ENCODE measurements at regions of chr15 and their contacts with region 1.

Region 1: GRCh38 chr15:70466895-70467529 is 296.3 kb downstream of the UACA start:
- DNase-seq: no peak
- ATAC-seq: peak; percentile 73
- H3K4me3 Mint-ChIP-seq: no peak overlapping the region
- H3K27ac Mint-ChIP-seq: no peak overlapping the region
- H3K4me1 Mint-ChIP-seq: peaks cover 20% of the 10 kb centered on the region
- H3K27me3 Mint-ChIP-seq: peaks cover 3% of the 10 kb centered on the region
- CTCF ChIP-seq: peak; percentile 72

Region 2: GRCh38 chr15:68730471-68730919 is 1736.5 kb before region 1 on chr15:
- CTCF ChIA-PET with region 1: no interaction called
- POLR2A ChIA-PET with region 1: no interaction called
- intact Hi-C with region 1: no loop called
- DNase-seq: no peak
- ATAC-seq: no peak
- H3K4me3 Mint-ChIP-seq: no peak overlapping the region
- H3K27ac Mint-ChIP-seq: no peak overlapping the region
- H3K4me1 Mint-ChIP-seq: peaks cover 21% of the 10 kb centered on the region
- H3K27me3 Mint-ChIP-seq: peaks cover 2% of the 10 kb centered on the region
- CTCF ChIP-seq: no peak

Region 3: DNA sequence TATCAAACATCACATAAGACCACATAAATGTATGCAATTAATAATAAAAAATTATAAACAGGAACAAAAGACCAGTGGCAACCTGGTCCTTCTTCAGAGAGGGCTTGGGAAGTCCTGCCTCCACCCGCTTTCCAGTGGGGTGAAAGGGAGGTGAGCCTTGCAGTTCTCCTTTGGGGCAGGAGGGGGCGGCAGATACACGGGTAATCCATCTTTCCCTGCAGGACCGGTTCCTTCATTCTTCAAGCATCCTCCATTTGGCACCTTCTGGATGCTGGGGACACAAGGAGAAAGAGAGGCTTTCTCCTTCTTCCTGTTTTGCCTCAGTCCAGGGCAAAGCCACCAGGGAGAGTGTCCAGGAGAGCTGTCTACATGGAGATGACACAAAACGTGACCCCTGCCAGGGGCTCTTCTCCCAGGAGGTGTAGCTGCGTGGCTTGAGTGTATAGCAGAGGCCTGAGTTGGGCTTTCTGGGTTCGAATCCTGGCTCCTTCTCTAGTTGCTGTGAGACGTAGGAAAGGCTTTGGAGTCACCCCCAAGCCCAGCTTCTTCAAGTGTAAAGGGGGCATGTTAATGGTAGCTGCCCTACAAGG is 991.1 kb before region 1 on chr15:
- CTCF ChIA-PET with region 1: interaction called, 10 read pairs
- POLR2A ChIA-PET with region 1: no interaction called
- intact Hi-C with region 1: loop called (anchors 1 kb)
- DNase-seq: peak; percentile 65
- ATAC-seq: peak; percentile 88
- H3K4me3 Mint-ChIP-seq: no peak overlapping the region
- H3K27ac Mint-ChIP-seq: no peak overlapping the region
- H3K4me1 Mint-ChIP-seq: peaks cover 3% of the 10 kb centered on the region
- H3K27me3 Mint-ChIP-seq: peaks cover 6% of the 10 kb centered on the region
- CTCF ChIP-seq: no peak

Region 4: DNA sequence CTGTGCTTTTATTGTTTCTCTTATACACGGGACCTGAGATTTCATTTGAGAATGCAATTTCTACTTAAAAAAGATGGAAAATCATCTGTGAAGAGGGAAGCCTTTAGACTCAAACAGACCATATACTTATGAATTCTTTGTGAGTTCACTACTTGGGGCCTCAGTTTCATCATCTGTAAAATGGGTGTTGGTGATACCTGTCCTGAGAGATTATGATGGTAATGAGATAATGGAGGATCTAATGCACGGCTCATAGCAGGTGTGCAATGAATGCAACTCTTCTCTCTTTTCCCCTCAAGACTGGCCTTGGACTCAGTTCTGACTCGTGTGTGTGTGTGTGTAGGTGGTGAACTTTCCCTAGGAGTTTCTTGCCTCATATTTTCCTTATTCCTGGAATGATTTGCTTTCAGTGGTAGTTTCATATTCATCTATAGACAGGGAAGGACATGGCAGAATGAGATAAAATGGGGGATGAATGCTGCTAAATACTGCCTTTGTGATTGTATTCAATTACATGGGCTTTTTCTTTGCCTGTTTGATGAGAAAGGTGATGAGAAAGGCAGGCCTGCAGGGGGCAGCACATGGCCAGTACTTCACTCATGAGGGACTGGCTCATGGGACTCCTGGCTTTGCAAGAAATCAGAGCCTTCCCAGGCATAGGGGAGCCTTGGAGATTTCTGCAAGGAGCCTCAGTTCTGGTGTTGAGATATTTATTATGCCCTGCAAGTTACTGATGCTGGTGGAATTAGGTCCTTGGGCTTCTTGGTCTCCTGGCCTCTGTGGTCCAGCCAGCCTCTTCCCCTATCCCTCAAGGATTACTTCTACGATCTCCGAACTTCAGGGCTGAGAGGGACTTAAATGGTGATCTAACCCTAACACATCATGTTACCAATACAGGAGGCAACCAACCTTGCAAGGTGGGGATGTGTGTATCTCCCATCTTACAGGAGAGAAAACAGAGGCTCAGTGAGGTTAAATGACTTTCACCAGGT is 943.7 kb before region 1 on chr15:
- CTCF ChIA-PET with region 1: interaction called, 5 read pairs
- POLR2A ChIA-PET with region 1: no interaction called
- intact Hi-C with region 1: loop called (anchors 1 kb)
- DNase-seq: peak; percentile 32
- ATAC-seq: peak; percentile 42
- H3K4me3 Mint-ChIP-seq: no peak overlapping the region
- H3K27ac Mint-ChIP-seq: no peak overlapping the region
- H3K4me1 Mint-ChIP-seq: no peaks in the 10 kb centered on the region
- H3K27me3 Mint-ChIP-seq: peaks cover 12% of the 10 kb centered on the region
- CTCF ChIP-seq: no peak

Region 5: DNA sequence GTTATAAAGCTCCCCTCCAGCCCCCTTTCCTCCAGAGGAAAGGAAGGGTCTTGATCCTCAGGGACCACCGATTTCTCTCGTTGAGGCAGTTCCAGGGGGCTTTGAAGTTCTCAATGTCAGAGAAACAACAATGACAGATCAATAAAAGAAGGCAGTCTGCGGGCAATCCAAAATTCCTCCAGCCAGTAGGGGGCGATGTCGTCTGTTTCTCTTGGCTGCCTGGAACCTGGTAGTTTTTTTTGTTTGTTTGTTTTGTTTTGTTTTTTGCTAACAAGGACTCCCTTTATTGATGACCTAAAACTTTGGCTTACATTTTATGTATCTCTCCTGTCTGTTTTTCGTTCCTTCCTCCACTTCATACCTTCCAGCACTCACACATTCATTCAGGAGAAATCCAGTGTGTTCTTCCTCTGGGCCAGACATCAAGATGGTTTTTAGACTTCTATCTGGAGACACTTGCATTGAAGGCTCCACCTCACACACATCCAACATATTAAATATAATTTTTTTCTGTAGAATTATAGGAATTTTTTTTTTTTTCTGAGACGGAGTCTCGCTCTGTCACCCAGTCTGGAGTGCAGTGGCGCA is 737.8 kb before region 1 on chr15:
- CTCF ChIA-PET with region 1: interaction called, 3 read pairs
- POLR2A ChIA-PET with region 1: no interaction called
- intact Hi-C with region 1: loop called (anchors 1 kb)
- DNase-seq: peak; percentile 49
- ATAC-seq: no peak
- H3K4me3 Mint-ChIP-seq: no peak overlapping the region
- H3K27ac Mint-ChIP-seq: no peak overlapping the region
- H3K4me1 Mint-ChIP-seq: peaks cover 18% of the 10 kb centered on the region
- H3K27me3 Mint-ChIP-seq: peaks cover 3% of the 10 kb centered on the region
- CTCF ChIP-seq: peak; percentile 73

Region 6: GRCh38 chr15:70451821-70452653 is 15.0 kb before region 1 on chr15:
- CTCF ChIA-PET with region 1: interaction called, 13 read pairs
- POLR2A ChIA-PET with region 1: no interaction called
- intact Hi-C with region 1: no loop called
- DNase-seq: no peak
- ATAC-seq: no peak
- H3K4me3 Mint-ChIP-seq: no peak overlapping the region
- H3K27ac Mint-ChIP-seq: no peak overlapping the region
- H3K4me1 Mint-ChIP-seq: peaks cover 17% of the 10 kb centered on the region
- H3K27me3 Mint-ChIP-seq: peaks cover 6% of the 10 kb centered on the region
- CTCF ChIP-seq: no peak

Region 7: DNA sequence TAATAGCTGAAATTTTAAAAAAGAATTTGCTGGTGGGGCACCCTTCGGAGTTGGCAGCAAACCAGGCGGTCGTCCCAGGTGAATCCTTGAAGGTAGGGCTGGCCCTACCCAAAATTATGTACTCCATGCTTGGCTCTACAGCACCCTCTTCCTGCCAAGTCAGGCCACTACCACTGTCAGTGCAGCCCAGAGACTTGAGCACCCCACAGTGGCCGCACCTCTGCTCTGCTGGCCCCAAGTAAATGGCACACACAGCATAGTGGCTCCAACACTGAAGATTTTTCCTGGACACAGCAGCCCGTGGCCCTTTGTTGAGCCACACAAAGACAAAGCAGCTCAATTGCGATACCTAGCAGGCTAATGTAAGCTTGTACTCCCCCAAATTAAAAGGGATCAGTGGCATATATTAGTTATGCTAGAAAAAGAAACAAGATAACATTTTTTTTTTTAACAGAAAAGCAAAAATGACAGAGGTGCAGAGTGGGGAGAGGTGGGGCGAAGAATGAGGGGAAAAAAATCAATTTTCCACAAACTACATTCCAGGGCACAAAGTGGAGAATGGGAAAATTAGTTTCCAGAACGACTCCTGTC is 45.9 kb after region 1 on chr15:
- CTCF ChIA-PET with region 1: no interaction called
- POLR2A ChIA-PET with region 1: no interaction called
- intact Hi-C with region 1: loop called (anchors 2 kb)
- DNase-seq: no peak
- ATAC-seq: peak; percentile 80
- H3K4me3 Mint-ChIP-seq: no peak overlapping the region
- H3K27ac Mint-ChIP-seq: no peak overlapping the region
- H3K4me1 Mint-ChIP-seq: peaks cover 32% of the 10 kb centered on the region
- H3K27me3 Mint-ChIP-seq: peaks cover 5% of the 10 kb centered on the region
- CTCF ChIP-seq: no peak

Region 8: DNA sequence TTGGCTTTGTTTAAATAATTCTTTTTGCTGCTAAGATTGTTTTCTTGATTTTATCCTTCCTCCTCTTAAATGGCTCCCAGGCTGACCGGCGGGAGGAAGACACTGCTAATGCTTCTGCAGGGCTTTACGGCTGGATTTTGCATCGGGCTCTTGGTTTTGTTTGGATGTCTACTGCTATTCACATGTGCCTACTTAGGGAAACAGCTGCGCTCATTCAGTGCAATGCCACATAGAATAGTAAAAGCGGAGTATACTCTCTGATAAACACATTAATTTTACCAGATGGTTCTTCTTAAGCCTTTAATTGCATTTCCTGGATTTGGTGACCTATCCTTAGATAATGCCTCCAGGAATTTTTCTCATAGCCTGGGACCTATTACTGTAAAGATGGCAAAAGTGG is 794.9 kb after region 1 on chr15:
- CTCF ChIA-PET with region 1: no interaction called
- POLR2A ChIA-PET with region 1: no interaction called
- intact Hi-C with region 1: no loop called
- DNase-seq: no peak
- ATAC-seq: no peak
- H3K4me3 Mint-ChIP-seq: no peak overlapping the region
- H3K27ac Mint-ChIP-seq: no peak overlapping the region
- H3K4me1 Mint-ChIP-seq: no peaks in the 10 kb centered on the region
- H3K27me3 Mint-ChIP-seq: no peaks in the 10 kb centered on the region
- CTCF ChIP-seq: no peak

Measured in activated B cell treated with CpG ODN at 0.5 μM for 24 hours (primary cell).